Activated B cell treated with CpG ODN at 0.5 μM for 24 hours (primary cell): ENCODE measurements at regions of chr17 and their contacts with region 1.

Region 1: GRCh38 chr17:32319548-32319905 is 22.4 kb downstream of the C17orf75 start:
- DNase-seq: peak; percentile 85
- ATAC-seq: peak; percentile 99
- H3K4me3 Mint-ChIP-seq: peak overlapping the region; percentile 84
- H3K27ac Mint-ChIP-seq: peak overlapping the region; percentile 80
- H3K4me1 Mint-ChIP-seq: peaks cover 31% of the 10 kb centered on the region
- H3K27me3 Mint-ChIP-seq: no peaks in the 10 kb centered on the region
- CTCF ChIP-seq: peak; percentile 62

Region 2: DNA sequence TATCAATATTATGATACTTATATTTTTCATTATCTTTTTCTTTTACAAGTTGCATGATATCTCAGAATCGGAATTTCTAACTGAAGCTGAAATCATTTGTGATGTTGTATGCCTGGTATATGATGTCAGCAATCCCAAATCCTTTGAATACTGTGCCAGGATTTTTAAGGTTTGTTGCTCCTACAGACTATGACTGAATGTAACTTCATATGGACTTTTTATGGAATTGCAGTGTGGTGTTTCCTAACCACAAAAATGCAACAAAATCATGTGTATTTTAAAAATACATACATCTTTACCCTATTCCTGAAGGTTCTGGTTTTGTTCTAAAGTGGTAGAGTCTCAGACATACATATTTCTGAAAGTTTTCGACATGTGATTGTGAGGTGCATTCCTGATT is 112.7 kb before region 1 on chr17:
- CTCF ChIA-PET with region 1: interaction called, 14 read pairs
- POLR2A ChIA-PET with region 1: interaction called, 13 read pairs
- intact Hi-C with region 1: loop called (anchors 1 kb)
- DNase-seq: no peak
- ATAC-seq: no peak
- H3K4me3 Mint-ChIP-seq: no peak overlapping the region
- H3K27ac Mint-ChIP-seq: no peak overlapping the region
- H3K4me1 Mint-ChIP-seq: no peaks in the 10 kb centered on the region
- H3K27me3 Mint-ChIP-seq: no peaks in the 10 kb centered on the region
- CTCF ChIP-seq: no peak

Region 3: DNA sequence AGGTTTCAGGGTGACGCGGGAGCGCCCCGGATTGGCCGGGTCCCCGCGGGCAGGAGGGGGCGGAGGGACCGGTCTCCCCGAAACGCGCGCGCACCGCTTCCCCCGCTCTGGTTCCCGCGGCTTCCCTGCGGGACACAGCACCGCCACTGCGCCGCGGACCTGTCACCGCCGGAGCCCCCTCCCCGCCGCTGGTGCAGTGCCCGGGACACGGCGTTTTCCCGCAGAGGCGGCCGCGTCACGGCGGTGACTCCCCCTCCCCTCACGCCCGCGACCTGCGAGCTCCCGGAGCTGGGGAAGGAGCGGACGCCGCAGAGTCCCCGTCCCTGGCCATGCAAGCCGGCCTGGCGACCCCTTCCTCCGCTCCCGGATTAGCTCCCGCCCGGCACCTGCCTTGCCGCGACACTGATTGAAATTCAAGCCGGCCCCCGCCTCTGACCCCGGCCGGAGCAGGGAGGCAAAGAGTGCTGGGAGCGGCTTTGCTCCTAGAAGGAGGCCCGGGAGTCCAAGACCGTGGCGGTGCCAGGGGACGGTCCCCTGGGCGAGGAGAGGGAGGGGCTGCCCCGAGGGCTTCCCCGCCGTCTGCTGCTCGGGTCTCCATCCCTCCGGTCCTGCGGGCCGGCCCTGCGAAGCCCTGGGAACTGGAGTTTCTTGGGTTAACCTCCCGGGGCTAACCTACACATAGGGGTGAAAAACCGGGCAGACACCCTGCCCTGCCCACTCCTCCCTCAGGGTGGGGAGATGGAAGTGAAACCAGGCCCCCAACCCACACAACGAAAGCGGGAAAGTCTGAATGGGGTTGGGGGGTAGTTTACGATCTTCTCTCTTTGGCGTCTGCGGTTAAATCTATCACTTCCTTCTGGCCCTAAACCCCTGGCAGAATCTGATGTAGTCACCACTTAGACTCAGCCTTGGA is 52.9 kb before region 1 on chr17:
- CTCF ChIA-PET with region 1: no interaction called
- POLR2A ChIA-PET with region 1: no interaction called
- intact Hi-C with region 1: loop called (anchors 2 kb)
- DNase-seq: peak; percentile 32
- ATAC-seq: peak; percentile 41
- H3K4me3 Mint-ChIP-seq: peak overlapping the region; percentile 80
- H3K27ac Mint-ChIP-seq: no peak overlapping the region
- H3K4me1 Mint-ChIP-seq: peaks cover 17% of the 10 kb centered on the region
- H3K27me3 Mint-ChIP-seq: peaks cover 54% of the 10 kb centered on the region
- CTCF ChIP-seq: no peak

Region 4: DNA sequence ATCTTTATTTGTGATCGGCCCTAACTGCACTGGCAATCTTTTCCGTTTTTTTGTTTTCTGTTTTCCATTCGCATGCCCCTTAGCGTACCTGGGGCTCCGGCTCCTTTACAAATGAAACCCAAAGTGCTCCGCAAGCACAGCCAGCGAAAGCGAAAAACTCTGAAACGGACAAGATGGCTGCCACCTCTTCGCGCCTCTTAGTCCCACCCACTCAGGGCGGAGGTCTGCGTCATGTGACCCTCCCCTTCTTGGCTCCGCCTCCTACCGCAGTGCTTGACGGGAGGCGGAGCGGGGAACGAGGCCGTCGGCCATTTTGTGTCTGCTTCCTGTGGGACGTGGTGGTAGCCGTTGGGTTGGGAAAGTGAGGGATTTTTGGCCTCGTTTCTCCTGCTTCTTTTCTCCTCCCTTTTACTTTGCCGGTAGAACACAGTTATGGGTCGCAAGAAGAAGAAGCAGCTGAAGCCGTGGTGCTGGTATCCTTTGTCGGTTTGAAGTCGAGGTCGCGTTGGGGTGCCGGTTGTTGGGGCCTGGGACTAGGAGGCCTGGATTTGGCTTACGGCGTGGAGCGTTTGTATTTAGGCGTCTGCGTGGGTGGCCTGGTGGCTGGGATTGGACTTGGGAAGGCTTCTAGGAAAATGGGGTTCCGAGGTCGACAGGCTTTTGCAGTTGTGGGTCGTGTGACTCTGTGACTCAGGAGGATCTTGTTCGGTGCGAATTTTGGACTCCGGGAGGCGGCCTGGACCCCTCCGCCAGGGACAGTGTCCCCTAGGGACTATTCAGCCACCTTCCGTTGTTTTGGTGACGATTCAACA is 30.5 kb after region 1 on chr17 and contains the start of gene ZNF207:
- CTCF ChIA-PET with region 1: interaction called, 6 read pairs
- POLR2A ChIA-PET with region 1: interaction called, 5 read pairs
- intact Hi-C with region 1: loop called (anchors 1 kb)
- DNase-seq: peak; percentile 89
- ATAC-seq: peak; percentile 98
- H3K4me3 Mint-ChIP-seq: peak within 1 kb of the TSS; percentile 98
- H3K27ac Mint-ChIP-seq: peak within 1 kb of the TSS; percentile 99
- H3K4me1 Mint-ChIP-seq: peaks cover 40% of the 10 kb centered on the region
- H3K27me3 Mint-ChIP-seq: no peaks in the 10 kb centered on the region
- CTCF ChIP-seq: no peak
- total RNA-seq, gene ZNF207: 231 and 276 TPM in 2 replicates